Motor neuron (in vitro differentiated cells): ENCODE measurements at regions of chr9 and their contacts with region 1.

Region 1: DNA sequence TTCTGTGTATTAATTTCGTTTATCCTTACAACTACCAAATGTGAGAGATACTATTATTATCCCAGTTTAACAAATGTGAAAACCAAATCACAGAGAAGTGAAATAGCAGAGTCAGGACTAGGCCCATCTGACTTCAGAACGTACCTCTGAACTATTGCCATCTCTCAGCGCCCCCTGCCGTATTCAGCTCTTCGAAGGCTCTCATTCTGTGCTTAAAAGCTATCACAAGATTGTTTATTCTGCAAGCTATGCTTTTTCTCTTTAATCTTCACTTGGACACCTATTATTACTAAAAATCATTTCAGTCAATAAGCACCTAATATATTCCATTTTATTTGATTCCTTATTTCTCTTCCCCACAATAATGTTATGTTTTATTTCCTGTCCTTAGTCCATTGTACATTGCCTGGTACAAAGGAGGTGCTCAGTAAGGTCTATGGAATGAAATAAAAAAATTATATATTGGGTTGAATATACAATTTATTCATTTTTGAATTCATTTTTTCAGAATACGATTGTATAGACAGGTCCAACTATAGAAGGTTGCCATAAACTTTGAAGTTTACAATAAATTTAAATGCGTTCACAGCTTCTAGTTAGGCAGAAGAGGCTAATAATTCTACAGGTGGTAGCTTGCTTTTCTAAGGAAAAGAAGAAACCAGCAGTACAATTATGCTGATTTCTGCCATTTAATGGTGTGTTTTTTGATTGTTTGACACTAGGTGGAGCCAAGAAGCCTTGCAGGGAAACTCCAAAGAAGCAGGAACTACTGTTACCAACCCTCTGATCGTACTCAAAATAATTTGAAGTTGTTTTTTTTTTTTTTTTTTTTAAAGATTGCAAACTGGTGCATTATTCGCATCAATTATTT is 202.2 kb upstream of the DMRTA1 start:
- ATAC-seq: peak in 3 of 8 experiments; percentile 80 to 89 (median 83)
- H3K4me3 ChIP-seq: no peak overlapping the region
- H3K27ac ChIP-seq: no peak overlapping the region
- H3K4me1 ChIP-seq: no peaks in the 10 kb centered on the region

Region 2: GRCh38 chr9:21802195-21803000 is 442.0 kb before region 1 on chr9 and contains the start of gene MTAP:
- in situ Hi-C with region 1: loop called in 2 of 9 experiments (anchors 25 kb)
- ATAC-seq: peak; percentile 83 to 97 (median 93)
- H3K4me3 ChIP-seq: peak within 1 kb of the TSS; percentile 66 to 85 (median 72)
- H3K27ac ChIP-seq: peak within 1 kb of the TSS; percentile 16 to 71
- H3K4me1 ChIP-seq: peaks cover 10 to 12% of the 10 kb centered on the region in 2 donors
- total RNA-seq, gene MTAP: 11.2 to 47.5 (median 18.8) TPM

Region 3: GRCh38 chr9:22008736-22009562 is 235.4 kb before region 1 on chr9 and contains the start of gene CDKN2B:
- in situ Hi-C with region 1: loop called in 2 of 9 experiments (anchors 25 kb)
- ATAC-seq: peak; percentile 92 to 96 (median 94)
- H3K4me3 ChIP-seq: peak within 1 kb of the TSS; percentile 44 to 62 (median 52)
- H3K27ac ChIP-seq: peak within 1 kb of the TSS in 1 of 2 donors; percentile 1
- H3K4me1 ChIP-seq: peaks cover 2 to 14% of the 10 kb centered on the region in 2 donors
- total RNA-seq, gene CDKN2B: 3.0 to 45.3 (median 7.5) TPM

Region 4: DNA sequence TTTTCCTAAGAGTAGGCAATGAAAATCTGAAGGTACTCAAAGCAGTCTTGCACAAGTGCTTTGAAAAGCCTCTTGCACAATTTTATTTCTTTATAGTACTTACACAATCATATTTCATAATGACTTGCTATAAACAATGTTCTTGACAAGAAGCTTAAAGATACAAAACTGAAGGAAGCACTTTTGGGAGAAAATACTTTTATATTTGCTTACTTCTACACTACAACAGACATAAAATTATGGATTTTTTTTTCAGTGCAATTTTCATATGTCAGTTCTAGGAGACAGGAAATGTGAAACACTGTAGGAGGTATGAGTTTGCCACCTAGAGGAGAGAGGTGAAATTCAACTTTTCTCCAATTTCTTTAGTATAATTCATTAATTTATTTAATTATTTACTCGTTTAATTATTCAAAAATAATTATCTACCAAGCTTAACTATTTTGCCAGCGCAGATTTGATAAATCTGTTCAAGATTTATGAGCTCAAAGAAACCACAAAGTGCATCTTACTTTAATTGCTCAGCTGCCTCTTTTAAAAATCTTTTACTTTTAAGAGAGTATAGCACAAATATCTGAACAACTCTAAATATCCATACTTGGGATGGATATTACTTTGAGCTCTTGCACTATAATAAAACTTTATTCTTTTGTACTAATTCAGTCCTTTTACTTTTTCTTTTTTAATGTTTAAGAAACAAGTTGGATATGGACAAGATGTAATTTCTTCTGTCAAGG is 206.3 kb before region 1 on chr9:
- in situ Hi-C with region 1: loop called in 1 of 9 experiments (anchors 25 kb)
- ATAC-seq: peak in 1 of 8 experiments; percentile 11
- H3K4me3 ChIP-seq: no peak overlapping the region
- H3K27ac ChIP-seq: no peak overlapping the region
- H3K4me1 ChIP-seq: no peaks in the 10 kb centered on the region

Region 5: GRCh38 chr9:22084336-22085035 is 159.9 kb before region 1 on chr9:
- in situ Hi-C with region 1: no loop called
- ATAC-seq: peak; percentile 41 to 88 (median 68)
- H3K4me3 ChIP-seq: no peak overlapping the region
- H3K27ac ChIP-seq: no peak overlapping the region
- H3K4me1 ChIP-seq: no peaks in the 10 kb centered on the region